B cell (primary cell): ENCODE measurements at regions of chr22 and their contacts with region 1.

Region 1: GRCh38 chr22:17171313-17172171 is 12.5 kb upstream of the HDHD5 start:
- DNase-seq: peak; percentile 87
- ATAC-seq: peak; percentile 89
- H3K4me3 ChIP-seq: peak overlapping the region; percentile 16 to 69 (median 58)
- H3K4me3 Mint-ChIP-seq: peak overlapping the region; percentile 86
- H3K27ac ChIP-seq: peak overlapping the region in 1 of 2 donors; percentile 6
- H3K27ac Mint-ChIP-seq: peak overlapping the region; percentile 73
- H3K4me1 ChIP-seq: peaks cover 2 to 11% of the 10 kb centered on the region in 2 donors
- H3K4me1 Mint-ChIP-seq: peaks cover 8% of the 10 kb centered on the region
- H3K27me3 ChIP-seq: no peaks in the 10 kb centered on the region
- H3K27me3 Mint-ChIP-seq: peaks cover 3% of the 10 kb centered on the region
- CTCF ChIP-seq: peak; percentile 92

Region 2: DNA sequence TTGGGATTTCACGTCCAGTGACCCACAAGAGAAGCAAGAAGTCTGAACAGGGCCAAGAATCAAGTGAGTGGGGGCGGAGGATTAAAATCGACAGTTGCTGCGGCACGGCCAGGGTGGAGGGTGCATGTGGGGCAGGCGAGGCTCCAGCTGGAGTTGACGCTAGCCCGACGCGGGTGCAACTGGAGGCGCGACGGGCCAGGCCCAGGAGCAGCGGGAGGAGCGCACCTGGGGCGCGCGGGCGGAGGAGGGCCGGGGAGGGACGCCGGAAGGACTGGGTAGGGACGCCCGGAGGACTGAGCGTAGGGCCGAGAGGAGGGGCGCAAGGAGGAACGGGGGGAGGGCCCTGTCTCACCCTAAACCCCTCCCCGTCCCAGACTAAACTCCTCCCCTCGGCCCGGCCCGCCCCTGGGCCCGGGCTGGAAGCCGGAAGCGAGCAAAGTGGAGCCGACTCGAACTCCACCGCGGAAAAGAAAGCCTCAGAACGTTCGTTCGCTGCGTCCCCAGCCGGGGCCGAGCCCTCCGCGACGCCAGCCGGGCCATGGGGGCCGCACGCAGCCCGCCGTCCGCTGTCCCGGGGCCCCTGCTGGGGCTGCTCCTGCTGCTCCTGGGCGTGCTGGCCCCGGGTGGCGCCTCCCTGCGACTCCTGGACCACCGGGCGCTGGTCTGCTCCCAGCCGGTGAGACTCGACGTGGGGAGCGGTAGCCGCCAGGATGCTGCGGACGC is 86.8 kb before region 1 on chr22 and contains the start of gene IL17RA:
- CTCF ChIA-PET with region 1: interaction called, 9 read pairs
- POLR2A ChIA-PET with region 1: no interaction called
- intact Hi-C with region 1: loop called (anchors 2 kb)
- DNase-seq: peak; percentile 93
- ATAC-seq: peak; percentile 99
- H3K4me3 ChIP-seq: peak within 1 kb of the TSS; percentile 65 to 97 (median 81)
- H3K4me3 Mint-ChIP-seq: peak within 1 kb of the TSS; percentile 95
- H3K27ac ChIP-seq: peak within 1 kb of the TSS; percentile 26 to 80
- H3K27ac Mint-ChIP-seq: peak within 1 kb of the TSS; percentile 95
- H3K4me1 ChIP-seq: peaks cover 25 to 36% of the 10 kb centered on the region in 2 donors
- H3K4me1 Mint-ChIP-seq: peaks cover 36% of the 10 kb centered on the region
- H3K27me3 ChIP-seq: no peaks in the 10 kb centered on the region
- H3K27me3 Mint-ChIP-seq: no peaks in the 10 kb centered on the region
- CTCF ChIP-seq: no peak
- total RNA-seq, gene IL17RA: 22.4 and 24.6 TPM in 2 replicates

Region 3: DNA sequence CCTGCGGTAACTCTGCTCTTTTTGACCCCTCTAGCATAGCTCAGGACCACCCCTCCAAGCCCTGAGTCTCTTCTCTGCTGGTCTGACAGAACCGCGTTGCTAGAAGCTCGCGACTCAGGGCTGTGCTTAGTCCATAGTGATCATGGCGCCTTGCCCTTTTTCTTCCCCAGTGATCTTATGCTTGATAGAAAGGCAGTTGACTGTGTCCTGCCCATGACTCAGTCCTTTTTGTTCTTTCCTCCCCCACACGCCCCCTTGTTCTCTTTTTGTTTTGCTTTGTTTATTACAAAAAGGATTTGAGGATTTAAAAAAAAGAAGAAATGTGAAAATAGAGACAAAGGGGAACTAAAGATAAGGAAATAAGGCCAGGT is 69.3 kb before region 1 on chr22:
- CTCF ChIA-PET with region 1: no interaction called
- POLR2A ChIA-PET with region 1: no interaction called
- intact Hi-C with region 1: no loop called
- DNase-seq: no peak
- ATAC-seq: no peak
- H3K4me3 ChIP-seq: no peak overlapping the region
- H3K4me3 Mint-ChIP-seq: no peak overlapping the region
- H3K27ac ChIP-seq: no peak overlapping the region
- H3K27ac Mint-ChIP-seq: no peak overlapping the region
- H3K4me1 ChIP-seq: peaks cover 19 to 32% of the 10 kb centered on the region in 2 donors
- H3K4me1 Mint-ChIP-seq: peaks cover 26% of the 10 kb centered on the region
- H3K27me3 ChIP-seq: no peaks in the 10 kb centered on the region
- H3K27me3 Mint-ChIP-seq: no peaks in the 10 kb centered on the region
- CTCF ChIP-seq: no peak

Region 4: DNA sequence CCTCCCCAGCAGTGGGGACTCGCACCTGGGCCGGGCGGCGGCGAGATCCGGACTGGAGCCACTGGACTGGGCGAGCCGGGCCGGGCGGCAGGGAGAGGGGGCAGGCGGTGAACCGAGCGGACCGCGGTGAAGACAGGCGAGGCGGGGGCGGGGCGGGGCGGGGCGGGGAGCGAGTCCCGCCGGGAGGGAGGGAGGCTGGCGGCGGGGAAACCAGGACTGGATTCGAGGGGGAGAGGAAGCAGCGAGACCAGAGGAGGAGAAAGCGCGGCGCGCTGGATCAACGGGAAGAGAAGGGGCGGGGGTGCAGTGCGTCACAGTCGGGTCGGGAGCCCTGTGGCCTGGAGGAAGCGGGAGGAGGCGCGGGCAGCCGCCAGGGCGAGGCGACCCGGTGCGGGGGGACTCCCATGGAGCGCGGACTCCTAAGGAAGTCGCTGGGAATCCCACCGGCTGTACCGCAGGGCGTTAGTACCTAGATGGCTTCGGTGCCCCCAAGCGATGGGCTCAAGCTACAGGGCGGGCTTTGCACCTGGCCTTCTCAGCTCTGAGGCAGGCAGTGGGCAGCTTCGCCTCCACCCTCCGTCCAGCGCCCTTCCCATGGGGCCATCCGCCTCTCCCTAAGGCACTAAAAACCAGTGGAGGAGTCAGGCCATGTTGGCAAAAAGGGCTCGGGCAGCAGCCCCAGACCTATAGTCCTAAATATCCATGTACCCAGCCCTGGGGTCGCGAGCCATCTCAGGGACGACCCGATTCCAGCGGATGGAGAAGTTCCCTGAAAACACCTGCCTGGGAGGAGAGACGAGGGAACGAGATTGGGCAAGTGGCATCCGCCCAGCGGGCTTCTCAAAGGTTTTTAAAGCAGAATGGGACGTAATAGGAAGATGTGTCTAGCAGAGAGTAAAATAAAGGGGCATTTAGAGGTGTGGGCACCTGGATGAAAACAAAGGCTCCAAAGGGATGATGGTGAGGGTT is 50.0 kb before region 1 on chr22 and contains the start of gene TMEM121B:
- CTCF ChIA-PET with region 1: no interaction called
- POLR2A ChIA-PET with region 1: no interaction called
- intact Hi-C with region 1: no loop called
- DNase-seq: no peak
- ATAC-seq: no peak
- H3K4me3 ChIP-seq: peak within 1 kb of the TSS in 3 of 5 experiments; percentile 11 to 41 (median 30)
- H3K4me3 Mint-ChIP-seq: peak within 1 kb of the TSS; percentile 69
- H3K27ac ChIP-seq: no peak within 1 kb of the TSS
- H3K27ac Mint-ChIP-seq: no peak within 1 kb of the TSS
- H3K4me1 ChIP-seq: peaks cover 34% of the 10 kb centered on the region in 2 donors
- H3K4me1 Mint-ChIP-seq: peaks cover 33% of the 10 kb centered on the region
- H3K27me3 ChIP-seq: peaks cover 0 to 38% (median 13%) of the 10 kb centered on the region in 4 experiments
- H3K27me3 Mint-ChIP-seq: peaks cover 22% of the 10 kb centered on the region
- CTCF ChIP-seq: no peak
- total RNA-seq, gene TMEM121B: 0.12 TPM in 1 of 2 replicates, not detected in the other

Region 5: GRCh38 chr22:17199003-17199731 is 27.6 kb after region 1 on chr22:
- CTCF ChIA-PET with region 1: interaction called, 10 read pairs
- POLR2A ChIA-PET with region 1: no interaction called
- intact Hi-C with region 1: no loop called
- DNase-seq: no peak
- ATAC-seq: no peak
- H3K4me3 ChIP-seq: no peak overlapping the region
- H3K4me3 Mint-ChIP-seq: no peak overlapping the region
- H3K27ac ChIP-seq: no peak overlapping the region
- H3K27ac Mint-ChIP-seq: no peak overlapping the region
- H3K4me1 ChIP-seq: no peaks in the 10 kb centered on the region
- H3K4me1 Mint-ChIP-seq: no peaks in the 10 kb centered on the region
- H3K27me3 ChIP-seq: no peaks in the 10 kb centered on the region
- H3K27me3 Mint-ChIP-seq: no peaks in the 10 kb centered on the region
- CTCF ChIP-seq: no peak

Region 6: DNA sequence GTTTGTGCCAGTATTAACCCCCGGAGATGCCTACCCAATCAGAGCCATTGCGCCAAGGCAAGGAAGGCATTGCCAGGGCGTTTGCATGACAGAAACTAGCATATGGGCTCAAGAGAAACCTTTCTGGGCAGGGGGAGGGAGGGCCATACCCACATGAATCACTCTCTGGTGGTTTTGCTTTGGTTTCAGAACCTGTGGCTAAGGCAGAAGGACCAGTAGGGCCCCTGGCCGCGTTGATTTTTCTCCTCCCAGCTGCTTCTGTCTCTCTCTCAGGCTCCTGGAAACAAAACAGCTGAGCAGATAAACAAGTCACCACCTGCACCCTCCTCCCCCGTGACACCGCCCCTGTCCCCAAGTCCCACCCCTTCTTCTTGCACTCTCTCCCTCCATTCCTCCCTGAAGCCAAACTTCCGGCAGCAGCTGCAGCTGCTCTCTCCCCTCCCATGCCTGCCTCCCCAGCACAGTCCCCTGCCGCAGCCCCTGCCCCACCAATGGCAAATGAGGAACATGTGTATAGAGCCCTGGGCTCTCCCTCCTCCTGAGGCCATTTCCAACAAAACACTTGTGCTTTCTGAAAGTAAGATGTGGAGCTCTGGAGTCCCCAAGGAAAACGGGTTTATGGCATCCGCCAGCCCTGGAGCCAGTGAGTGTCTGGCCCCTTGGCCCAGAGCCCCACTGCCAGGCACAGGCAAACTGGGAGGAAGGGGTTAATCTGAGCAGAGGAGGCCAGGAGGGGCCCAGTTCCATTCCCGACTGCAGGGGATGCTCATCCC is 86.7 kb after region 1 on chr22:
- CTCF ChIA-PET with region 1: interaction called, 18 read pairs
- POLR2A ChIA-PET with region 1: no interaction called
- intact Hi-C with region 1: no loop called
- DNase-seq: peak; percentile 75
- ATAC-seq: peak; percentile 92
- H3K4me3 ChIP-seq: peak overlapping the region in 3 of 5 experiments; percentile 23 to 28 (median 27)
- H3K4me3 Mint-ChIP-seq: peak overlapping the region; percentile 72
- H3K27ac ChIP-seq: peak overlapping the region; percentile 34 to 65
- H3K27ac Mint-ChIP-seq: peak overlapping the region; percentile 95
- H3K4me1 ChIP-seq: peaks cover 17 to 26% of the 10 kb centered on the region in 2 donors
- H3K4me1 Mint-ChIP-seq: peaks cover 29% of the 10 kb centered on the region
- H3K27me3 ChIP-seq: no peaks in the 10 kb centered on the region
- H3K27me3 Mint-ChIP-seq: no peaks in the 10 kb centered on the region
- CTCF ChIP-seq: no peak

Region 7: DNA sequence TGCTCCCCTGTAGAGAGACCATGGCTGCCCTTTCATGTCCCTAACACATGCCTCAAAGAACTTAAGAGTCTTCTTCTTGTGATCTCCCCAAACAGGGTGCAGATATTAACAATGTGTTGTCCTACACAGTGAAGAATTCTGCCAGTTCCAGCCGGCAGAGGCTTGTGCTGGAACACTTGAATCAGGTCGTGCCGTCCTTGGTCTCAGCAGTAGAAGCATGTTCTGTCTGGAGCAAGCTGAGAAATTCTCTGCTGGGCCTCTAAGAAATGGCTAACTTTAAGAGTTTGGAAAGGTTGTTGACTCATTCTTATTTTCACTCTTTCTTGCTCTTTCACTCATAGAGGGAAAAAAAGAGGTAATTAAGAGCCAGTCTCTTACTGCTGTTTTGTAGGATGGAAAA is 320.7 kb after region 1 on chr22:
- CTCF ChIA-PET with region 1: interaction called, 302 read pairs
- POLR2A ChIA-PET with region 1: no interaction called
- intact Hi-C with region 1: no loop called
- DNase-seq: no peak
- ATAC-seq: no peak
- H3K4me3 ChIP-seq: no peak overlapping the region
- H3K4me3 Mint-ChIP-seq: no peak overlapping the region
- H3K27ac ChIP-seq: no peak overlapping the region
- H3K27ac Mint-ChIP-seq: no peak overlapping the region
- H3K4me1 ChIP-seq: peaks cover 0 to 7% of the 10 kb centered on the region in 2 donors
- H3K4me1 Mint-ChIP-seq: peaks cover 8% of the 10 kb centered on the region
- H3K27me3 ChIP-seq: no peaks in the 10 kb centered on the region
- H3K27me3 Mint-ChIP-seq: peaks cover 2% of the 10 kb centered on the region
- CTCF ChIP-seq: no peak